Heart left ventricle (tissue), 16 donors: ENCODE measurements at regions of chr18 and their contacts with region 1.

Region 1: GRCh38 chr18:10270151-10270571 is 184.3 kb upstream of the APCDD1 start:
- DNase-seq: peak in 4 of 5 donors; percentile 50 to 71 (median 60)
- ATAC-seq: peak; percentile 77 to 94 (median 90)
- H3K4me3 ChIP-seq: no peak overlapping the region
- H3K27ac ChIP-seq: peak overlapping the region in 10 of 12 donors; percentile 1 to 65 (median 44)
- H3K4me1 ChIP-seq: peaks cover 0 to 29% (median 14%) of the 10 kb centered on the region in 12 donors
- H3K27me3 ChIP-seq: no peaks in the 10 kb centered on the region
- CTCF ChIP-seq: no peak
- POLR2A ChIP-seq: no peak

Region 2: DNA sequence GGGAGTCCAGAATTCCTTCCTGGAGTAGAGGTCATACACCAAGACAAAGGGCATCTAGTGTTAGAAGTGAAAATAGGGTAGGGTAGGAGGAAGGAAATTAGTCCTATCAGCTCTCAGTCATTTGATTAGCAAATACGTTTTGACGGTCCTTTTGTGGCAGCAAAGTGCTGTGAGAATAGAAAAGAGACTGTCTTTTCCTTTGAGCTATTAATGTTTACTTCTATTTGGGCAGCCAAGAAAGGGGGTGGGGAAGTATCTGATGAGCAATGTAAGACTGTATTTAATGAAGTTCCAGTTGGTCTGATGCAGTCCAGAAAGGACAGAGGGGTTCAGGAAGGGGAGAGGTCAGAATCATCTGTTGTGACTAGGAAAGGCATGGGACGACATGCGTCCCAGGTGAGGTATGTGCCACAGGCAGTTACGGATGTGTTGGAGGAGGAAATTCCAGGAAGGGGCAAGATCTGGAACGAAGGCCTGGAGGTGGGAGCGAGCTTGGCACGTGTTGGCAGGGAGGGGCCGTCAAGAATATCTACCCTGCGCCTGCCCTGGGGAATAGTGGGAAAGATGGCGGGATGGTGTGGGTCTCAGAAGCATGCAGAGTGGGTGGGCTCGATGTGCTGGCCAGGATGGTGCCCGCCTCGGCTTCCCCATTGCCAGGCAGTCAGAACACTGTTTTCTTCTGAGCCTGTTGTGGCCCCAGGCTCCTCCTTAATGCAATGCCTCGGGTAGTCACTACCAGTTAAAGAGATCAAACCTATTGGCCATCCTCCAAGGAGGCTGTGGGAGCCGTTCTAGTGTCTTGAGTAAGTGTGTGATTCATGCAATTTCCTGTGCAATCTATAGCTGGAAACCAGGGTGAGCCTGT is 442.3 kb before region 1 on chr18:
- intact Hi-C with region 1: no loop called
- DNase-seq: peak in 2 of 5 donors; percentile 55 to 57
- ATAC-seq: peak in 3 of 4 donors; percentile 2 to 60 (median 18)
- H3K4me3 ChIP-seq: no peak overlapping the region
- H3K27ac ChIP-seq: peak overlapping the region in 6 of 12 donors; percentile 2 to 90 (median 20)
- H3K4me1 ChIP-seq: peaks cover 0 to 66% (median 24%) of the 10 kb centered on the region in 12 donors
- H3K27me3 ChIP-seq: no peaks in the 10 kb centered on the region
- CTCF ChIP-seq: no peak
- POLR2A ChIP-seq: no peak

Region 3: GRCh38 chr18:10057894-10058791 is 212.0 kb before region 1 on chr18:
- intact Hi-C with region 1: loop called in 1 of 10 experiments (anchors 10 kb)
- DNase-seq: no peak
- ATAC-seq: peak in 3 of 4 donors; percentile 29 to 43 (median 30)
- H3K4me3 ChIP-seq: no peak overlapping the region
- H3K27ac ChIP-seq: peak overlapping the region in 11 of 12 donors; percentile 17 to 88 (median 63)
- H3K4me1 ChIP-seq: peaks cover 0 to 69% (median 44%) of the 10 kb centered on the region in 12 donors
- H3K27me3 ChIP-seq: no peaks in the 10 kb centered on the region
- CTCF ChIP-seq: no peak
- POLR2A ChIP-seq: no peak